ENCODE measurements at regions of chr5 and their contacts with region 1.

Region 1: GRCh38 chr5:150155258-150156026 is at the start of gene PDGFRB:
- DNase-seq: peak; percentile 49 to 87 (median 78)
- H3K4me3 ChIP-seq: peak within 1 kb of the TSS; percentile 44 to 76 (median 65)
- H3K27ac ChIP-seq: peak within 1 kb of the TSS; percentile 42 to 96 (median 84)
- H3K27me3 ChIP-seq: no peaks in the 10 kb centered on the region
- CTCF ChIP-seq: peak in 1 of 56 donors; percentile 12
- total RNA-seq, gene PDGFRB: 34.7 to 209 (median 68.0) TPM

Region 2: DNA sequence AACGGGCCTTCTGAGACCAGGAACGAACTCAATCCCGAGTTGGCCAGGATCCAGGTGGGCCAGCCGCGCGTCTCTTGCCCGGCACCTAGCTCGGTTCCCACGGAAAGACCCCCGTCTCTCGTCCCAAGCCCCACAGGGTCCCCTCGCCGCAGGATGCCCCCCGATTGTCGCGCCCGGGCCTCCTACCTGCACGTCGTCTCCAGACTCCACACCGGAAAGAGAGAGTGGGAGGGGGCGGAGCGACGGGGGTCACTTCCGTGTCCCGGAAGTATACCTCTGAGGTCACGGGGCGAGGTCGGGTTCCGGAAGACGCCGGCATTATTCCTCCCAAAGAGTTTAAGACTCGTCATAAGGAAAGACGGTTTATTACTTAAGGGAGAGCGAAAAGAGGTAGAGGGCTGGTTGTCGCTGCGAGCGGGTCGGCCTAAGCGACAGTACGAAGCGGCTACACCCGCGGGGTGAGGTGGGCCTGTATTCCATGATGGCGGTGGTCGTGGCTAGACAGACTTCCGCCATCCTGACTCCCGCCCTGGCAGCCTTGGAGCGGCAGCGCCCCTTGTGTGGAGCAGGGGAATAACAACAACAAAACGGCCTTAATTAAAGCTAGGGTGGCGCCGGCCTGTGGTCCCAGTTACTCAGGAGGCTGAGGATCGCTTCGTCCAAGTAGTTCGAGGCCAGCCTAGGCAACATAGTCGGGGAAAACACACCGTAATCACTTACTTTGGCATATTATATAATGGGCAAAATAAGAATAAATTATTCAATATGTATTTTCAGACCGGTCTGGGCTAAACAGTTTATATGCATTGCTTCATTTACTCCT is 294.3 kb after region 1 on chr5 and contains the start of gene RPS14:
- intact Hi-C with region 1: loop called in 1 of 2 experiments (anchors 10 kb)
- DNase-seq: peak; percentile 83 to 92 (median 88)
- H3K4me3 ChIP-seq: peak within 1 kb of the TSS; percentile 59 to 99 (median 88)
- H3K27ac ChIP-seq: peak within 1 kb of the TSS; percentile 76 to 100 (median 98)
- H3K27me3 ChIP-seq: no peaks in the 10 kb centered on the region
- CTCF ChIP-seq: peak; percentile 85 to 100 (median 95)
- total RNA-seq, gene RPS14: 441 to 866 (median 635) TPM